K562 (cell line): ENCODE measurements at regions of chr3 and their contacts with region 1.

Region 1: DNA sequence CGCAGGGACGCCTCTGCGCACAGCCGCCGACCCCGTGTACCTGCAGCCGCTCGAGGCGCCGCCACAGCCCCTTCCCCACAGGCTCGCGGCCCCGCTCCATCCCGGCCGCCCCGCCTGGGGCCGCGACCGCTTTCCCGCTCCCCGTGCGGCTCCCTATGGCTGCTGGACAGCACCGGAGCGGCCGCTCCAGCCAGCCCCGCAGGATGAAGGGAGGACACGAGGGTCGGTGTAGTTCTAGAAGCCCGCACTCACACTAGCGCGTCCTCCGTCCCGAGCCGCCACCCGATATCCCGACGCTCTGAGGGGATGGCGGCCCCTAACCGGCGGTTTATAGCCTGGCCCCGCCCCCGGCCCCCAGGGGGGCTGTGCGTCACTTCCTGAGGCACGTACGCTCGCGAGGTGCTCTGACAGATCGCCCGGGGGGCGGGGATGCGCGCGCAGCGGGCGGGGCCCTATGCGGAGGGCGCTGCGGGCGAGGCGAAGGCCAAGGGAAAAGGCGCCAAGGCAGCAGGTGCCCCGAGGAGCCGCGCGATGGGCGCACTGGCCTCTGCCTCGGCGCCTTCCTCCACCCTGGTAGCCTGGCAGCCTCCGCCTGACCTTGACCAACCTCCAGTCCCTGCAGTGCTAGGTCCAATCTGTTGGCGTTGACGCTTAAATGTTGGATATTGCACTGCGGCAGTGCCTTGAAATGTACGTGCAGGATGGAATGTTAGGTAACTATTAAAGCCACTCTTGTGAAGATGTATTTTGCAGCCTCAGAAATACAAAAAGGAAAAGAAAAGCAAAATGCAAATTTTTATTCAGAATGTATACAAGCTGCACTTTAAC is at the start of gene TFRC:
- DNase-seq: peak; percentile 99
- ATAC-seq: peak; percentile 89
- H3K4me3 ChIP-seq: peak within 1 kb of the TSS; percentile 90
- H3K27ac ChIP-seq: peak within 1 kb of the TSS; percentile 89
- H3K4me1 ChIP-seq: peaks cover 10 to 14% of the 10 kb centered on the region in 2 experiments; a peak in 4 of 5 replicates
- H3K27me3 ChIP-seq: no peaks in the 10 kb centered on the region
- CTCF ChIP-seq: no peak; a peak in 1 of 6 replicates
- EP300 ChIP-seq: peak; percentile 59
- POLR2A ChIP-seq: peak; percentile 100
- RAD21 ChIP-seq: peak in 1 of 2 experiments; percentile 22; a peak in 2 of 4 replicates
- polyA plus RNA-seq, gene TFRC: 149 to 308 TPM

Region 2: GRCh38 chr3:196047391-196048030 is 34.5 kb before region 1 on chr3:
- CTCF ChIA-PET with region 1: no interaction called
- POLR2A ChIA-PET with region 1: interaction called, 13 read pairs
- in situ Hi-C with region 1: no loop called
- intact Hi-C with region 1: no loop called
- DNase-seq: peak in 2 of 4 experiments; percentile 21 to 46
- ATAC-seq: peak; percentile 48
- H3K4me3 ChIP-seq: no peak overlapping the region
- H3K27ac ChIP-seq: peak overlapping the region; percentile 23; the same call in 2 of the 3 replicates
- H3K4me1 ChIP-seq: no peaks in the 10 kb centered on the region; a peak in 1 of 5 replicates
- H3K27me3 ChIP-seq: no peaks in the 10 kb centered on the region
- CTCF ChIP-seq: no peak
- EP300 ChIP-seq: no peak
- POLR2A ChIP-seq: peak; percentile 77
- RAD21 ChIP-seq: no peak

Region 3: GRCh38 chr3:196111939-196112386 is 30.0 kb after region 1 on chr3:
- CTCF ChIA-PET with region 1: no interaction called
- POLR2A ChIA-PET with region 1: interaction called, 9 read pairs
- in situ Hi-C with region 1: no loop called
- intact Hi-C with region 1: loop called (anchors 1 kb)
- DNase-seq: no peak
- ATAC-seq: no peak
- H3K4me3 ChIP-seq: no peak overlapping the region
- H3K27ac ChIP-seq: 0 out of 3 replicates have a peak overlapping the region, but pooled peaks have one; percentile 18
- H3K4me1 ChIP-seq: peaks cover 22 to 42% of the 10 kb centered on the region in 2 experiments; a peak in 4 of 5 replicates
- H3K27me3 ChIP-seq: no peaks in the 10 kb centered on the region
- CTCF ChIP-seq: no peak
- EP300 ChIP-seq: no peak
- POLR2A ChIP-seq: no peak
- RAD21 ChIP-seq: no peak

Region 4: DNA sequence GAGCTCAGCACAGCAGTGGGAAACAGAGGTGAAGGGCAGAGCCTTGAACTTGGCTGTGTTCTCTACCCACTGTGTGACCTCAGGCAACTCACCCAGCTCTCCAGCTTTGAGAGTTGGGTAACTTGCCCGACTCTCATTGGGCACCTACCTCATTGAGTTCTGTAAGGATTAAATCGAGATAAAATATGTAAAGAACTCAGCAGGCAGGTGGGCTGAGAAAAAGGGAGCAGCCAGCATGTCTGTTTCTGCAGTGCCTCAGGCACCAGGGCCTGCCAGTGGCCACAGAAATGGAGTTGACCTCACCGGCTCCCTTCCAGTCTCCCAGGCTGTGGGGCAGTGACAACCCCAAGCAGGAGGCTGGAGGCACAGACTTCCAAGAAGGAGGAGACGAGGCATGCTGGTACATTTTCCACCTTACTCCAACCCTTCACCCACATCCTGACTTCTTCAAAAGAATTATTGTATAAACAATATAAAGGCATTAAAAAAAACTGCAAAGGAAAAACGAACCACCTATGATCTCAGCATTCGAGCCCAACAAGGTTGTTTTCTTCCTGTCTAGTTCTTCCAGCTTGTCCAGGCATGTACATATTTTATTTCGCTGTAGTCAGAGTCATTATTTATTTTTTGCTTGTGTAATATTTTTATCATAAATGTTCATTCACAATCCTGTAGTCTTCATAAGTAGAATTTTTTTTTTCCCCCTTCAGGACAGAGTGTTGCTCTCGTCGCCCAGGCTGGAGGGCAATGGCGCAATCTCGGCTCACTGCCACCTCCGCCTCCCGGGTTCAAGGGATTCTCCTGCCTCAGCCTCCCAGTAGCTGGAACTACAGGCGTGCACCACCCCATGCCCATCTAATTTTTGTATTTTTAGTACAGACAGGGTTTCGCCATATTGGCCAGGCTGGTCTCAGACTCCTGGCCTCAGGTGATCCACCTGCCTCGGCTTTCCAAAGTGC is 54.3 kb after region 1 on chr3:
- CTCF ChIA-PET with region 1: no interaction called
- POLR2A ChIA-PET with region 1: interaction called, 19 read pairs
- in situ Hi-C with region 1: no loop called
- intact Hi-C with region 1: no loop called
- DNase-seq: no peak
- ATAC-seq: peak; percentile 2; the same call in 1 of the 3 replicates
- H3K4me3 ChIP-seq: no peak overlapping the region
- H3K27ac ChIP-seq: peak overlapping the region; percentile 8; the same call in 1 of the 3 replicates
- H3K4me1 ChIP-seq: peaks cover 31 to 32% of the 10 kb centered on the region in 2 experiments
- H3K27me3 ChIP-seq: no peaks in the 10 kb centered on the region
- CTCF ChIP-seq: no peak
- EP300 ChIP-seq: no peak
- POLR2A ChIP-seq: no peak
- RAD21 ChIP-seq: no peak

Region 5: GRCh38 chr3:196179380-196180308 is 97.6 kb after region 1 on chr3:
- CTCF ChIA-PET with region 1: no interaction called
- POLR2A ChIA-PET with region 1: interaction called, 23 read pairs
- in situ Hi-C with region 1: no loop called
- intact Hi-C with region 1: no loop called
- DNase-seq: peak; percentile 50 to 74 (median 68)
- ATAC-seq: peak; percentile 61
- H3K4me3 ChIP-seq: no peak overlapping the region
- H3K27ac ChIP-seq: peak overlapping the region; percentile 57
- H3K4me1 ChIP-seq: peaks cover 59 to 73% of the 10 kb centered on the region in 2 experiments
- H3K27me3 ChIP-seq: no peaks in the 10 kb centered on the region
- CTCF ChIP-seq: peak in 2 of 3 experiments; percentile 21 to 33; a peak in 3 of 6 replicates
- EP300 ChIP-seq: no peak
- POLR2A ChIP-seq: no peak
- RAD21 ChIP-seq: no peak; a peak in 1 of 4 replicates

Region 6: DNA sequence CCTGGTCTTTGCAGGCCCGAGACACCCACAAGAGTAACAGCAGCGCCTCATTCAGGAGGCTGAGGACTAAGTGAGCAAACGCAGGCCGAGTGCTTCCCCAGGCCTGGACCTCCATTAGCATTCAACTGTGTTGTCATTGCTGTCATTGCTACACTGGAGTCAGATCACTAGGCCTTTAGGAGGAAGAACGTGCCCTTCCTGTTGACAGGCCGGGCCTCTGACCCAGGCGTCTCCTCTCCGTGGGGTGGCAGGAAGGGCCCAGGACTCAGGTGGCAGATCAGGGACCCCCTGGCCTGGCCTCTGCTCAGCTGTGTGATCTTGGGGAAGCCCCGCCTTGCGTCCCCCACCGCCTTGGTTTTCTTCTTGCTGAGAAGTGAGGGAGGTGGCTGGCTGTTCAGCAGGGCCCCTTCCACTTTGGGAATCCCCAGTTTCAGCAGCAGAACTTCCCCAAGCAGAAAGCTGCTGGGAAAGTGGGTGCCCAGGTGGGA is 110.1 kb after region 1 on chr3:
- CTCF ChIA-PET with region 1: no interaction called
- POLR2A ChIA-PET with region 1: interaction called, 30 read pairs
- in situ Hi-C with region 1: loop called (anchors 5 kb)
- intact Hi-C with region 1: no loop called
- DNase-seq: peak in 1 of 4 experiments; percentile 34
- ATAC-seq: no peak
- H3K4me3 ChIP-seq: no peak overlapping the region
- H3K27ac ChIP-seq: peak overlapping the region; percentile 62; the same call in 2 of the 3 replicates
- H3K4me1 ChIP-seq: peaks cover 46 to 83% of the 10 kb centered on the region in 2 experiments
- H3K27me3 ChIP-seq: no peaks in the 10 kb centered on the region
- CTCF ChIP-seq: no peak
- EP300 ChIP-seq: no peak
- POLR2A ChIP-seq: no peak
- RAD21 ChIP-seq: peak in 1 of 2 experiments; percentile 24; a peak in 1 of 4 replicates

Region 7: DNA sequence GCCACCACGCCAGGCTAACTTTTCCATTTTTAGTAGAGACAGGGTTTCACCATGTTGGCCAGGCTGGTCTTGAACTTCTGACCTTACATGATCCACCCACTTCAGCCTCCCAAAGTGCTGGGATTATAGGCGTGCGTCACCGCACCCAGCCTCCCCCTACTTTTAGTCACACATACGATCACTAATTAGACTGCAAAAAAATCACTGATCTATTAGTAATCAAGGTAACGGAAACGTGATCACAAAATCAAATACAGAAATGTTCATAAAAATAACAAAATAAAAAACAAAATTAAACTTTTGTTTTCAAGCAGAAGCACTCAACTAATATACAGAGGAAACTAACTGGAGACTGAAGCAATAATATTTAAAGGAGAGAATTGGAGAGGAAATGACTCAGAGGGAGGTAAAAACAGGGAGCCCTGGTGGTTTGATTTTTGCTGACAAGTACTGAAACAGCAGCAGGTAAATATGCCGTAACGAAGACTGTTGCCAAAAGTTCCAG is 481.8 kb after region 1 on chr3:
- CTCF ChIA-PET with region 1: no interaction called
- POLR2A ChIA-PET with region 1: no interaction called
- in situ Hi-C with region 1: no loop called
- intact Hi-C with region 1: no loop called
- DNase-seq: peak in 3 of 4 experiments; percentile 25 to 57 (median 54)
- ATAC-seq: peak; percentile 20; the same call in 2 of the 3 replicates
- H3K4me3 ChIP-seq: no peak overlapping the region
- H3K27ac ChIP-seq: peak overlapping the region; percentile 43; the same call in 1 of the 3 replicates
- H3K4me1 ChIP-seq: peaks cover 13 to 15% of the 10 kb centered on the region in 2 experiments
- H3K27me3 ChIP-seq: no peaks in the 10 kb centered on the region
- CTCF ChIP-seq: no peak
- EP300 ChIP-seq: no peak
- POLR2A ChIP-seq: no peak
- RAD21 ChIP-seq: no peak